CD4-positive, alpha-beta memory T cell (primary cell): ENCODE measurements at regions of chr10 and their contacts with region 1.

Region 1: GRCh38 chr10:83871187-83872081 is 267.9 kb upstream of the GHITM start:
- DNase-seq: peak in 4 of 5 donors; percentile 39 to 52 (median 46)
- H3K4me3 ChIP-seq: no peak overlapping the region
- H3K4me3 Mint-ChIP-seq: no peak overlapping the region
- H3K27ac ChIP-seq: no peak overlapping the region
- H3K27ac Mint-ChIP-seq: no peak overlapping the region
- H3K4me1 ChIP-seq: no peaks in the 10 kb centered on the region
- H3K4me1 Mint-ChIP-seq: no peaks in the 10 kb centered on the region
- H3K27me3 ChIP-seq: no peaks in the 10 kb centered on the region
- H3K27me3 Mint-ChIP-seq: peaks cover 0 to 2% of the 10 kb centered on the region in 2 donors

Region 2: GRCh38 chr10:83849135-83849534 is 22.3 kb before region 1 on chr10:
- CTCF ChIA-PET with region 1: interaction called, 13 read pairs
- POLR2A ChIA-PET with region 1: no interaction called
- intact Hi-C with region 1: no loop called
- DNase-seq: no peak
- H3K4me3 ChIP-seq: no peak overlapping the region
- H3K4me3 Mint-ChIP-seq: no peak overlapping the region
- H3K27ac ChIP-seq: no peak overlapping the region
- H3K27ac Mint-ChIP-seq: no peak overlapping the region
- H3K4me1 ChIP-seq: no peaks in the 10 kb centered on the region
- H3K4me1 Mint-ChIP-seq: no peaks in the 10 kb centered on the region
- H3K27me3 ChIP-seq: no peaks in the 10 kb centered on the region
- H3K27me3 Mint-ChIP-seq: no peaks in the 10 kb centered on the region

Region 3: GRCh38 chr10:83881661-83882060 is 10.2 kb after region 1 on chr10:
- CTCF ChIA-PET with region 1: interaction called, 34 read pairs
- POLR2A ChIA-PET with region 1: no interaction called
- intact Hi-C with region 1: no loop called
- DNase-seq: no peak
- H3K4me3 ChIP-seq: no peak overlapping the region
- H3K4me3 Mint-ChIP-seq: no peak overlapping the region
- H3K27ac ChIP-seq: no peak overlapping the region
- H3K27ac Mint-ChIP-seq: no peak overlapping the region
- H3K4me1 ChIP-seq: no peaks in the 10 kb centered on the region
- H3K4me1 Mint-ChIP-seq: no peaks in the 10 kb centered on the region
- H3K27me3 ChIP-seq: no peaks in the 10 kb centered on the region
- H3K27me3 Mint-ChIP-seq: peaks cover 0 to 3% of the 10 kb centered on the region in 2 donors

Region 4: DNA sequence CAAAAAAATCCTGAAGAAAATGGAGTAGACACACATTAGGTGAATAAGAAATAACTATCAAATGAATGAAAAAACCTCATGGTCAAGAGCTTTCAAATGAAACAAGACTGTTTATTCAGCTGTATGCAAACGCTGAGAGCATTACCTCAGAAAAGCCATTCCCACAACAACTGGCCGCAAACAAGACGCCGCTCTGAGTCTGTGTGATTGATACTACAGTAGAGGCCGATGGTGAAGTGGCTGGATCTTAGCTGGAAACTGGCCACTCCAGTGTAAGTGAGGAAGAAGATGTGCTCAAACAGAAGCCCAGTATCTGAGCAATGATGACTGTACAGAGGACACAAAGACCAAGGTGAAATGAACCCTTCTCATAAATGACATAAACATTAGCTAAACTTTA is 15.4 kb after region 1 on chr10:
- CTCF ChIA-PET with region 1: interaction called, 34 read pairs
- POLR2A ChIA-PET with region 1: no interaction called
- intact Hi-C with region 1: no loop called
- DNase-seq: no peak
- H3K4me3 ChIP-seq: no peak overlapping the region
- H3K4me3 Mint-ChIP-seq: no peak overlapping the region
- H3K27ac ChIP-seq: no peak overlapping the region
- H3K27ac Mint-ChIP-seq: no peak overlapping the region
- H3K4me1 ChIP-seq: no peaks in the 10 kb centered on the region
- H3K4me1 Mint-ChIP-seq: no peaks in the 10 kb centered on the region
- H3K27me3 ChIP-seq: no peaks in the 10 kb centered on the region
- H3K27me3 Mint-ChIP-seq: peaks cover 5% of the 10 kb centered on the region in 2 donors